Activated CD4-positive, alpha-beta memory T cell treated with anti-CD3 and anti-CD28 coated beads, Interleukin-2, amount 10 ng/mL, durations not matched to agents 7 days and 5 days (primary cell): ENCODE measurements at regions of chr1 and their contacts with region 1.

Region 1: GRCh38 chr1:89762779-89763648 is 57.8 kb upstream of the LRRC8D start:
- DNase-seq: peak; percentile 88
- H3K4me3 Mint-ChIP-seq: peak overlapping the region; percentile 78
- H3K27ac Mint-ChIP-seq: peak overlapping the region; percentile 75
- H3K4me1 Mint-ChIP-seq: peaks cover 59% of the 10 kb centered on the region
- H3K27me3 Mint-ChIP-seq: peaks cover 1% of the 10 kb centered on the region

Region 2: DNA sequence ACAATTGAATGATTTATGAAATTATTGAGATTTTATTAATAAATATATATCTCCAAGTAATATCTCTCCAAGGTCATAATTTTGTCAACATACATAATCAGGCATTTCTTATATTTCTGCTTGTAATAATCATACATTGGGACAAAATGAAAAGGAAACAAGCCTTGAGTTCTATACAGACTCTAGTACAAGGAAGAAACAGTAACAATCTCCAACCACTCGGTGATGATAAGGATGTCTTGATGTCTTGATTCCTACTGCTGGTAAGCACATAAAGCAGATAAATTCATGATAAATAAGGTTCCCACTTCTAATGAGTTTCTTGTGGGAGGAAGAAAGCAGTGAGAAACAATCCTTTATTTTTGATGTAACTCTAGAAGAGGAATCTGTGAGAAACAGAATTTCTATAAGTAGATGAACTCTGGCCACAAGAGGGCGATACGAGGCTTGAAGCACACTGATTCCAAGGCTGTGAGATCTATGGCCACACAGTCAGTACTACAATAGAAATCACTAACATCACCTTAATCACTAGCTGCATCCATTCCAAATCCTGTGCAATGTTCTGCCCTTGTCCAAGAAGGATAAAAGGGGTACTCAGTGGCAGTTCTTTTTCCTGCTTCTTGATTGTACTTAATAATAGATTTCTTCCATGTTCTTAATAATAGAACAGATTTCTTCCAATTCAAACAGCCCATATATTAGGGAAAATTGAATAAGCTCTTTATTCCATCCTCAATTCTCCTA is 279.8 kb before region 1 on chr1:
- CTCF ChIA-PET with region 1: interaction called, 69 read pairs
- POLR2A ChIA-PET with region 1: interaction called, 9 read pairs
- DNase-seq: peak; percentile 82
- H3K4me3 Mint-ChIP-seq: no peak overlapping the region
- H3K27ac Mint-ChIP-seq: no peak overlapping the region
- H3K4me1 Mint-ChIP-seq: peaks cover 14% of the 10 kb centered on the region
- H3K27me3 Mint-ChIP-seq: no peaks in the 10 kb centered on the region

Region 3: GRCh38 chr1:89615676-89616598 is 147.1 kb before region 1 on chr1:
- CTCF ChIA-PET with region 1: interaction called, 62 read pairs
- POLR2A ChIA-PET with region 1: interaction called, 73 read pairs
- DNase-seq: no peak
- H3K4me3 Mint-ChIP-seq: no peak overlapping the region
- H3K27ac Mint-ChIP-seq: no peak overlapping the region
- H3K4me1 Mint-ChIP-seq: peaks cover 83% of the 10 kb centered on the region
- H3K27me3 Mint-ChIP-seq: no peaks in the 10 kb centered on the region

Region 4: GRCh38 chr1:89632657-89633247 is 130.3 kb before region 1 on chr1 and contains the start of gene LRRC8C:
- CTCF ChIA-PET with region 1: interaction called, 174 read pairs
- POLR2A ChIA-PET with region 1: interaction called, 119 read pairs
- DNase-seq: peak; percentile 90
- H3K4me3 Mint-ChIP-seq: peak within 1 kb of the TSS; percentile 88
- H3K27ac Mint-ChIP-seq: peak within 1 kb of the TSS; percentile 89
- H3K4me1 Mint-ChIP-seq: peaks cover 71% of the 10 kb centered on the region
- H3K27me3 Mint-ChIP-seq: no peaks in the 10 kb centered on the region
- total RNA-seq, gene LRRC8C: 52.5 to 55.6 TPM

Region 5: GRCh38 chr1:89670163-89670562 is 92.9 kb before region 1 on chr1:
- CTCF ChIA-PET with region 1: interaction called, 32 read pairs
- POLR2A ChIA-PET with region 1: interaction called, 14 read pairs
- DNase-seq: no peak
- H3K4me3 Mint-ChIP-seq: peak overlapping the region; percentile 56
- H3K27ac Mint-ChIP-seq: peak overlapping the region; percentile 71
- H3K4me1 Mint-ChIP-seq: peaks cover 89% of the 10 kb centered on the region
- H3K27me3 Mint-ChIP-seq: no peaks in the 10 kb centered on the region

Region 6: GRCh38 chr1:89692601-89693521 is 70.2 kb before region 1 on chr1:
- CTCF ChIA-PET with region 1: interaction called, 28 read pairs
- POLR2A ChIA-PET with region 1: interaction called, 13 read pairs
- DNase-seq: no peak
- H3K4me3 Mint-ChIP-seq: no peak overlapping the region
- H3K27ac Mint-ChIP-seq: peak overlapping the region; percentile 49
- H3K4me1 Mint-ChIP-seq: peaks cover 78% of the 10 kb centered on the region
- H3K27me3 Mint-ChIP-seq: no peaks in the 10 kb centered on the region

Region 7: DNA sequence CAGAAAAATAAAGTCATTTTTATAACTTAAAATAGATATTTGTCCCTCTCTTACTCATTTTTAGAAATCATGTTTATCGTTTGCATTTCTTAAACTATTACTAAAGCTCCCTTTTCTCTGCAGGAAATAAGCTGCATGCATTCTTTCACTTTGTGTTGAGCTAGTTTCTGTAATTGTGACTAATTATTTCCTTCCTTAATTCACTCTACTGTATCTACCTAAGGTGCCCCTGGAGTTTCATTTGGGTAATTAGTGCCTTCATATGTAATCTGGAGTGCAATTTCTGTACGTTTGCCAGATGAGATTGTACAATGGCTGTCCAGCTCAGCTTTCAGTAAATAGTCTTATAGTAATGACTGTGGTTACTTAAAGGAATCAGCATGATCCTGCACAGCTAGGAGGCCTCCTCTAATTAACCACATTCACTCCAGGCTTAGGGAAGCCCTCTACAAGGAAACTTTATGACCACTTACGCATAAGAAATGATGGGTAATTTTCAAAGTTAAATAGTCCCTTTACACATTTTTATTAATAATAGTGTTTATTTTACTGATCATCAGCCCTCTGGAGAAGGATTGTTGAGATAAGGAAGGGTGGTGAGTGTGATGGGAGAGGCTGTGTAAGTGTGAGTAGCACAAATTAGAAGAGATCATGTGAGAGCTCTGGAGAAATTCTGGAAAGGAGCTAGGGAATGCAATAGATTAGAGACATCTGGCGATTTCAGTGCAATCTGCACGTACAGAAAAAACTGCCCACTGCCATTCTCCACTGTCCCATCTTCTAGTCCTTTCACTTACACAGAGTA is 43.3 kb before region 1 on chr1:
- CTCF ChIA-PET with region 1: interaction called, 69 read pairs
- POLR2A ChIA-PET with region 1: interaction called, 65 read pairs
- DNase-seq: no peak
- H3K4me3 Mint-ChIP-seq: peak overlapping the region; percentile 61
- H3K27ac Mint-ChIP-seq: peak overlapping the region; percentile 97
- H3K4me1 Mint-ChIP-seq: peaks cover 88% of the 10 kb centered on the region
- H3K27me3 Mint-ChIP-seq: no peaks in the 10 kb centered on the region

Region 8: GRCh38 chr1:89873770-89874169 is 110.8 kb after region 1 on chr1:
- CTCF ChIA-PET with region 1: no interaction called
- POLR2A ChIA-PET with region 1: no interaction called
- DNase-seq: no peak
- H3K4me3 Mint-ChIP-seq: no peak overlapping the region
- H3K27ac Mint-ChIP-seq: no peak overlapping the region
- H3K4me1 Mint-ChIP-seq: peaks cover 16% of the 10 kb centered on the region
- H3K27me3 Mint-ChIP-seq: no peaks in the 10 kb centered on the region

Region 9: DNA sequence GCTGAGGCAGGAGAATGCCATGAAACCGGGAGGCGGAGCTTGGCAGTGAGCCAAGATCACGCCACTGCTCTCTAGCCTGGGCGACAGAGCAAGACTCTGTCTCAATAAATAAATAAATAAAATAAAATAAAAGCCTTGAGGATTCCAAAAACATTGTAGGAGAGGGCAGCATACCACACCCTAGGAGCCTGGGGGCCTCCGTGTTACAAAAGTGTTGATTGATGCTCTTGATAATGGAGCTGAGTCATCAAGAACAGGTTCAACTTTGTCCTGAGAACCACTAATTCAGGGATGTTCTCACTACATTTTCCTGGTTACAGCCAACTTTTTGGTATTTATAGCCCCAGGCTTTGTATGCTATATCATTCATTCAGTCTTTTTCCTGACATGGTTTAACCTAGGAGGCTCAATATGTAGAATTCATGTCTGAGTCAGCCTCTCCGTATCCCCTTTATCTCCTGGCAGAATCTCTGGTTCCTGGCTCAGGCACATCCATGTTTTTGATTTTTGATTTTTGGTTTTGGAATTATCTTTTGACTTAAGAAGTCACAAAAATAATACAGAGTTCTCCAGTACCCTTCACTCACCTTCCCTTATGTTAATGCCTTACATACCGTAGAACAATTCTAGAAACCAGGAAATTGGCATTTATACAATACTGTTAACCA is 127.2 kb after region 1 on chr1:
- CTCF ChIA-PET with region 1: no interaction called
- POLR2A ChIA-PET with region 1: no interaction called
- DNase-seq: no peak
- H3K4me3 Mint-ChIP-seq: no peak overlapping the region
- H3K27ac Mint-ChIP-seq: no peak overlapping the region
- H3K4me1 Mint-ChIP-seq: peaks cover 7% of the 10 kb centered on the region
- H3K27me3 Mint-ChIP-seq: no peaks in the 10 kb centered on the region

Region 10: DNA sequence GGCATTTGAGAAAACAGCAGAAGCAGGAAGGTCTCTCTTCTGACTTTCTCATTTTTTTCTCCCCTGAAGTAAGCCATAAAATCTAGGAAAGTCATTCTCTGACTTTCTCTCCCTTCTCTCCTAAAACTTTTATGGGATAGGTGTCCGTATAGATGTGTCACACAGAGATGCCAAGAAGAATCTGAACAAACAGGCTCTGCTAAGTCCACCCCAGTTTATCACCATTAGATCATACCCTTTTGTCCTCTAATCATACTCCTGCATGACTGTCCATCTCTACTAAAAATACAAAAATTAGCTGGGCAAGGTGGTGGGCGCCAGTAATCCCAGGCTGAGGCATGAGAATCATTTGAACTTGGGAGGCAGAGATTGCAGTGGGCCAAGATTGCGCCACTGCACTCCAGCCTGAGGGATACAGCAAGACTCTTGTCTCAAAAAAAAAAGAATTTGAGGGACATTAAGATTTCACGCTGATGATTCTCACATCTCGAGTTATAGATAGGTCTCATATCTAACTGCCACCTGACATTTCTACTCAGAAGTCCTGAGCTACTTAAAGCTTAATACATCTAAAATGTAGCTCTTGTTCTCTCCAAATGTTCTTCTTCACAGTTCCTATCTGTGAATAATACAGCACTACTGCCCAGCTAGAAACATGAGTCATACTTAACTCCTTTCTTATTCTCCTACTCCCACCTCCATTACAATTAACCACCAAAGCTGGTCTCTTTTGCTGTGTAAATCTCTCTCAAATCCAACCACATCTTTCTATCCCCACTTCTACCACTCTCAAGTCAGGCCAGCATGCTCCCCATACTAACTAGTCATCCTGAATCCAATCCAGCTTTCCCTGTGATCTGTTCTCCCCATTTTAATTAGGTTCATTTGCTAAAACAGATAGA is 1211.1 kb after region 1 on chr1:
- CTCF ChIA-PET with region 1: no interaction called
- POLR2A ChIA-PET with region 1: no interaction called
- DNase-seq: no peak
- H3K4me3 Mint-ChIP-seq: no peak overlapping the region
- H3K27ac Mint-ChIP-seq: no peak overlapping the region
- H3K4me1 Mint-ChIP-seq: peaks cover 11% of the 10 kb centered on the region
- H3K27me3 Mint-ChIP-seq: no peaks in the 10 kb centered on the region